Right ventricle myocardium superior (tissue), 1 donor: ENCODE measurements at regions of chr10 and their contacts with region 1.

Region 1: DNA sequence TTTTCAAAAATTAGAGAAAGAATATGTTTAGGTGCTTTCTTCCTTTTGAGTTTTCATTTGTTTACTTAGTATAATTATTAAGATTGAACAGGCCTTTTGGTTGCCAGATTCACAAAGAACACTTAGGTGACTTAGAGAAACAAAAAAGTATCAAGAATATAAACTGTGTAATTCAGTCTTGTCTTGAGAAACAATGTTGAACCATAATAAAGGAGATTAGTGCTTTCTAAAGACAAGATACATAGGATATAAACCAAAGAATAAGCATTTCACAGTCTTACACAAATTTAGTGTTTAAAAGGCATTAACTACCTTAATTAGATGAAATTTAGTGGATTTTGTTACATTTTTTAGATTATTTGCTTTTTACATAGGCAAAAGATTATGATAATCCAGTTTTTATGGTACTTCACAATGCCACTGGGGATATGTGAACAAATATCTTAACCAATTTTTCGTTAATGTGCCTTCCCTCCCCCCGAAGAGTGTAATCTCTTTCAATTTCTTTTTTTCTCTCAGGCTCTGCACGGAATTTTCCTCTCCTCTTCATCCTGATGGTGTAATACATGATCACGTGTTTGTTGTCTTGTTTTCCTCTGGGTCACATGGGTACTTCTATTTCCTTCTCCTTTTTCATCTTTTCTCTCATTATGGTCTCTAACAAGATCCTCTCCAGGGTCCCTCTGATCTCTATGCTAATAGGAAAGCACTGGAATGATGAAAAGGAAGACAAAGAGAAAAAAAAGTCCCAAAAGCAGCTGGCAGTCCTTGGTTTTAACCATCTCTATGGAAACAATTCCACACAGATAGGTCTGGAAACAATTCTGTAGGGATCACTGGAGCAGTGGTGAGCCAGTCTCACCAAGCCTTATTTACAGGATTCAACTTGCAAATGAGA is 3.7 kb upstream of the HNRNPH3 start:
- DNase-seq: no peak
- ATAC-seq: no peak

Region 2: DNA sequence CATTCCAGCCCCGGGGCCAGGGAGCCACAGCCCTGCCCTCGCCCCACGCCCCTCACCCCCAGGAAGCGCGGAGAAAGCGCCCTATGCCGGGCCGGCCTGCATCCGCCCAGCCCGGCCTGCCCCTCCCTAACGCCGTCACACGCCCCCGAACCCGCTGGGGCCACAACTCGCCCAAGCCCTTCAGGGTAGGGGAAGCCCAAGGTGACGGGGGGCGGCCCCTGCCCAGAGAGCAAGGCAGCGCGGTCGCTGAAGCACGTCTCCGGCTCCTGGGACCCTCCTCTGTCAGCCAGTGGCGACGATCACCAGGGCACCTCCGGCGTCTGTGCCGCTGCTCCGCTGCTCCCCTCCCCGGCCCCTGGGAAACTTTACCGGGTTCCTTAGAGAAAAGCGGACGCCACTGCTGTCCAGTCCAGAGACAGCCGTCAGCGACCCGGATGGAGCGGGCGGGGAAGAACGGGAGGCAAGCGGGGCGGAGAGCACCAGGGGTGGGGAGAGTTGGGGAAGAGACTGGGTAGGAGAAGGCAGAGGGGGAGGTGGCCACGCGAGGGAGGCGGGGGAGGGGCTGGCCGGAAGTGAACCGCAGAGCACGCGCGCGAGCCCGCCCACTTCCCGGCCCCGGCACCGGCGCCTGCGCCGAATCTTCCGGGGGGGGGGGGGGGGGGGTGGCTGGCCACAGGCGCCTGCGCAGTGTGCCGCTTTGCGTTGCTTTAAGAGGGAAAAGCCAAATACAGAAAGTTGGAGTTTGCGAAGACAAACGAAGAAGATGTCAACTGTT is 253.2 kb before region 1 on chr10 and contains the start of gene HERC4:
- intact Hi-C with region 1: loop called (anchors 10 kb)
- DNase-seq: peak; percentile 96
- ATAC-seq: peak; percentile 99
- total RNA-seq, gene HERC4: 24.1 TPM